Activated CD4-positive, alpha-beta T cell treated with anti-CD3 and anti-CD28 coated beads for 36 hours (primary cell): ENCODE measurements at regions of chr13 and their contacts with region 1.

Region 1: GRCh38 chr13:94710881-94711560 is 1.3 kb downstream of the SOX21 start:
- DNase-seq: peak; percentile 52
- ATAC-seq: peak; percentile 63
- H3K4me3 Mint-ChIP-seq: peak overlapping the region; percentile 19
- H3K27ac Mint-ChIP-seq: no peak overlapping the region
- H3K4me1 Mint-ChIP-seq: peaks cover 21% of the 10 kb centered on the region
- H3K27me3 Mint-ChIP-seq: peaks cover 68% of the 10 kb centered on the region

Region 2: DNA sequence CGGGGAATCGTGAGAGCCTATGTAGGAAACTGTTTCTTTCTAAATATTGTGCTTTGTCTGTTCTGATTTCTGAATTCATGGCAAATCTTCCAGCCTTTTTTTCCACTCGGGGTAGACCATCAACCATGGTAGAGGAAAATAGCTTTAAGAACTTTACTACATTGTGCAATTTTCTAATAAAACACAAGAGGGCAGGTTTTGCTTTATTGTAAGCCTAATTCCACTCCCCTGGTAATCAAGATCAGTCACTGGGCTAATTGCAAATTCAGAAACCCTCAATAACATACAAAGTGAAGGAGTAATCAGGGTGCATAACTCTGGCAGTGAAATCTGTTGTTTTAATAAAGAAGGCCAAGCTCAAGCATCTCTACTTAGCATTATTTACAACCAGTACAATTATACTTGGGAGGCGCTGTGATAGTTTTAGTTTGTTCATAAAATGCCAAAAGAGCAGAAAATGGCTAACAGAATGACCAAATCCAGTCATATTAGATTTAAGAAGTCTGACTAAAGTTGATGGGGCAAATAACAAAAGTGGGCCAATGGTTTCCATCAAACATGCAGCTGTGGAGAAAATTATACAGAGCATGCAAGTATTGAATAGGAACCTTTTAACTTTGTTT is 275.3 kb before region 1 on chr13:
- CTCF ChIA-PET with region 1: interaction called, 3 read pairs
- POLR2A ChIA-PET with region 1: no interaction called
- intact Hi-C with region 1: loop called in 1 of 2 experiments (anchors 5 kb)
- DNase-seq: no peak
- ATAC-seq: peak; percentile 65
- H3K4me3 Mint-ChIP-seq: no peak overlapping the region
- H3K27ac Mint-ChIP-seq: no peak overlapping the region
- H3K4me1 Mint-ChIP-seq: peaks cover 33% of the 10 kb centered on the region
- H3K27me3 Mint-ChIP-seq: no peaks in the 10 kb centered on the region

Region 3: GRCh38 chr13:94967183-94968039 is 256.4 kb after region 1 on chr13:
- CTCF ChIA-PET with region 1: interaction called, 3 read pairs
- POLR2A ChIA-PET with region 1: interaction called, 3 read pairs
- intact Hi-C with region 1: loop called (anchors 5 to 10 kb)
- DNase-seq: peak; percentile 55
- ATAC-seq: peak; percentile 81
- H3K4me3 Mint-ChIP-seq: peak overlapping the region; percentile 13
- H3K27ac Mint-ChIP-seq: no peak overlapping the region
- H3K4me1 Mint-ChIP-seq: peaks cover 8% of the 10 kb centered on the region
- H3K27me3 Mint-ChIP-seq: peaks cover 52% of the 10 kb centered on the region

Region 4: DNA sequence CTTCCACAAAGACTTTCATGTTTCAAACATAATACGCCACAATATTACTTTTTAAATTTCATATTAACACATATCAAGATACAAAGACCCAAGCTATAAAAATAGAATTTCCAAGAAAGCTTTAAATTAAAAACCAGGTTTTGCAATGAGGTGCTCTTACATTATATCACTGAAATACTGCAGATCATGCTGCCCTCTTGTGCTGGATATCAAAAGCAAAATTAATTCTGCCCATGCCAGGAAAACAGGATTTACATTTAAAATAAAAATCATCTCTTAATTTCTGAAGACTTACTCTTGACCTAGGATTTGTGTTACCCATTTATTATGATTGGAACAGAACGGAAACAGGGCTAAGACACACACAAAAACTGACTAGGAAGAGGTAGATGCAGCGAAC is 445.2 kb after region 1 on chr13:
- CTCF ChIA-PET with region 1: no interaction called
- POLR2A ChIA-PET with region 1: no interaction called
- intact Hi-C with region 1: loop called in 1 of 2 experiments (anchors 10 kb)
- DNase-seq: no peak
- ATAC-seq: no peak
- H3K4me3 Mint-ChIP-seq: no peak overlapping the region
- H3K27ac Mint-ChIP-seq: no peak overlapping the region
- H3K4me1 Mint-ChIP-seq: peaks cover 9% of the 10 kb centered on the region
- H3K27me3 Mint-ChIP-seq: no peaks in the 10 kb centered on the region